ENCODE measurements at regions of chr21 and their contacts with region 1.

Region 1: GRCh38 chr21:22791986-22792560 is 1793.9 kb downstream of the NCAM2 start:
- DNase-seq: peak; percentile 19
- H3K4me3 Mint-ChIP-seq: no peak overlapping the region
- H3K27ac Mint-ChIP-seq: no peak overlapping the region
- H3K4me1 Mint-ChIP-seq: no peaks in the 10 kb centered on the region
- H3K27me3 Mint-ChIP-seq: no peaks in the 10 kb centered on the region

Region 2: DNA sequence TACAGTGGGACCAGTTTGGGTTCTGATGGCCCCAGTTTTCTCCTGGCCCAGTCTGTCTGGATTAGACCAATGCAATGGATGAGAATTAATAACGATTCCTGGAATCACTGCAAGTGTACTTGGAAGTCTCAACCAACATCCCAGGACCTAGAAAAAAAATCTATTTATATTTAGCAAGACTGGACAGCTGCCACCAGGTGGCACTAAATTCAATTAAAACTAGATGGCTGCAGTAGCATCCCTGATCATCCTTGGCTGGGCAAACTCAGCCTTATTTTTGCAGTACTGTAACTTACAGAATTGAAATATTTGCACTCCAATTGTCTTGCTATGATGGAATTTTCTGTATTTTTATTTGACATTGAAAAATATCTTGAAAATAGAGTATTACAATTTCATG is 1628.2 kb before region 1 on chr21:
- CTCF ChIA-PET with region 1: interaction called, 3 read pairs
- intact Hi-C with region 1: loop called (anchors 1 kb)
- DNase-seq: peak; percentile 51
- H3K4me3 Mint-ChIP-seq: no peak overlapping the region
- H3K27ac Mint-ChIP-seq: no peak overlapping the region
- H3K4me1 Mint-ChIP-seq: no peaks in the 10 kb centered on the region
- H3K27me3 Mint-ChIP-seq: no peaks in the 10 kb centered on the region

Region 3: GRCh38 chr21:21921421-21922232 is 870.4 kb before region 1 on chr21:
- CTCF ChIA-PET with region 1: no interaction called
- intact Hi-C with region 1: loop called (anchors 5 kb)
- DNase-seq: no peak
- H3K4me3 Mint-ChIP-seq: no peak overlapping the region
- H3K27ac Mint-ChIP-seq: no peak overlapping the region
- H3K4me1 Mint-ChIP-seq: no peaks in the 10 kb centered on the region
- H3K27me3 Mint-ChIP-seq: peaks cover 4% of the 10 kb centered on the region

Region 4: DNA sequence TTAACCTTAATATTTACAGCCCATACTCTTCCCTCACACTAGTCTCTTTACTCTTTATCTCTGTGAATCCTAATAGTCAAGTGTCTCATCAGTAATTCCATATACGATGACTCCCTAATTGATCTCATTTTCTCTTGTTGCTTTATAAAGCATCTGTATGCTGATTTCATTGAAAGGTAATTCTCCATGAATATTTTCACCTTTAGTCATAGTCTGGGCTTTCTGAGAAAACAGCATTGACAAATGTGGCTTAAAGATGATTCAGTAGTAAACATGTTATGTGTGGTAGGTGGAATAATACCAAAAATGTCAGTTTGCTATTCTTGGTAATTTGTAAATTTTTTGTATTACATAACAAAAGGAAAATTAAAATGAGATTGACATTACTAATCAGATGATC is 617.3 kb before region 1 on chr21:
- CTCF ChIA-PET with region 1: no interaction called
- intact Hi-C with region 1: no loop called
- DNase-seq: no peak
- H3K4me3 Mint-ChIP-seq: no peak overlapping the region
- H3K27ac Mint-ChIP-seq: no peak overlapping the region
- H3K4me1 Mint-ChIP-seq: no peaks in the 10 kb centered on the region
- H3K27me3 Mint-ChIP-seq: no peaks in the 10 kb centered on the region

Region 5: GRCh38 chr21:22804151-22804550 is 12.1 kb after region 1 on chr21:
- CTCF ChIA-PET with region 1: interaction called, 10 read pairs
- intact Hi-C with region 1: no loop called
- DNase-seq: no peak
- H3K4me3 Mint-ChIP-seq: no peak overlapping the region
- H3K27ac Mint-ChIP-seq: no peak overlapping the region
- H3K4me1 Mint-ChIP-seq: no peaks in the 10 kb centered on the region
- H3K27me3 Mint-ChIP-seq: no peaks in the 10 kb centered on the region

Measured in activated naive CD4-positive, alpha-beta T cell treated with anti-CD3 and anti-CD28 coated beads for 36 hours (primary cell).